ENCODE measurements at regions of chr7 and their contacts with region 1.

Region 1: DNA sequence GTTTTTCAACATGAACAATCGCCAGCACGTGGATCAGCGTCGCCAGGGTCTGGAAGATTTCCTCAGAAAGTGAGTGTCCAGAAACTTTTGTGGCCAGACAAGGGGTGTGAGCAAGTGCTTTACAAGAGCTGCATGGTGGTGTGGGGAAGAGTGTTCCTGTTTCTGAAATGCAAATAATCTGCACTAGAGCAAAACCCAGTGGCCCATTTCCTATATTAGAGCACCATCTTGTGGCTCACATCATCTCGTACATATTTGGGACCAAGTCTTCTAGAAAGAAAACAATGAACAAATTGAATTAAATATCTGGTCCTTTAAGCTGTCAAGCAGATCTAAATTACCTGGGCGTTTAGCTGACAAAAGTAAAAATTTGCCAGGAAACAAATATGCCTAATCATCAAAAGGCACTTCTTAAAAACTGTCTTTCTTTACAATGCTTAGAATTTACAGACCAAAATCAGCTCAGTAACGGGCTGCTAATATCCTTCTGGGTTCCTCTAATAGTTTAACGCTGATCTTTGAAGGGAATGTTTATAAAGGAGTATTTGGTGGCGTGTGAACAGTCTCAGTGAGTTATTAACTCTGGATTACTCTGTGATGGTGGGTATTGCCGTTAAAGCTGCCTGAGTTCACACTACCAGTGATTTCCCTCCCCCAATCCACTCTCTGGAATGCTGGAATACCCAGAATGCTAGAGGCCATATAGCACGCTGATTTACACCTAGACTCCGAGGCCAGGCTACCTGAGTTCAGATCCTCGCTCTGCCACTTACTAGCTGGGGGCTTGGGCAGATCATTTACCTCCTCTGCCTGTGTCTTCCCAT is 73.6 kb downstream of the SNX10 start:
- DNase-seq: peak; percentile 59
- ATAC-seq: peak; percentile 80
- H3K4me3 Mint-ChIP-seq: no peak overlapping the region
- H3K27ac Mint-ChIP-seq: no peak overlapping the region
- H3K4me1 Mint-ChIP-seq: peaks cover 11% of the 10 kb centered on the region
- H3K27me3 Mint-ChIP-seq: no peaks in the 10 kb centered on the region
- CTCF ChIP-seq: peak; percentile 70

Region 2: GRCh38 chr7:26078437-26079336 is 286.6 kb before region 1 on chr7:
- CTCF ChIA-PET with region 1: interaction called, 18 read pairs
- POLR2A ChIA-PET with region 1: no interaction called
- intact Hi-C with region 1: loop called (anchors 2 kb)
- DNase-seq: peak; percentile 92
- ATAC-seq: peak; percentile 99
- H3K4me3 Mint-ChIP-seq: no peak overlapping the region
- H3K27ac Mint-ChIP-seq: no peak overlapping the region
- H3K4me1 Mint-ChIP-seq: peaks cover 6% of the 10 kb centered on the region
- H3K27me3 Mint-ChIP-seq: peaks cover 18% of the 10 kb centered on the region
- CTCF ChIP-seq: peak; percentile 75

Region 3: DNA sequence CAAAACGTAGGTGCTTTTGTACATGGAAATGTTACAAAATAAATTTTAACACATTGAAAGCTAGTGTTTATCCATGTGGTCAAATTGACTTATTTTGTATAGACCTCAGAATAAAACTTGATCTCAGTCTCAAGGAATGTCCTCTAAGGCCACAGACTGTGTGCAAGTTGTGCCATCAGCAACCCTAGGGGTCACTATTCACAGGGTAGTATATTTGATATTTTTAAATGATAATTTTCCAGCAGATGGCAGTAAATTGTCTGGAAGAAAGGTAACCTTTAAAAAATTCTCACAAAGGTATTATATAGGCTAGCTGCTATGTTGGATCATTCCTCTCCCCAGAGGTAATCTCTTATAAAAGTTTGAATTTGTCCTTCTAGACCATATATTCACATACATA is 86.5 kb before region 1 on chr7:
- CTCF ChIA-PET with region 1: interaction called, 12 read pairs
- POLR2A ChIA-PET with region 1: no interaction called
- intact Hi-C with region 1: no loop called
- DNase-seq: peak; percentile 10
- ATAC-seq: peak; percentile 37
- H3K4me3 Mint-ChIP-seq: no peak overlapping the region
- H3K27ac Mint-ChIP-seq: no peak overlapping the region
- H3K4me1 Mint-ChIP-seq: peaks cover 24% of the 10 kb centered on the region
- H3K27me3 Mint-ChIP-seq: no peaks in the 10 kb centered on the region
- CTCF ChIP-seq: peak; percentile 44

Region 4: GRCh38 chr7:26305463-26306273 is 59.6 kb before region 1 on chr7:
- CTCF ChIA-PET with region 1: interaction called, 12 read pairs
- POLR2A ChIA-PET with region 1: no interaction called
- intact Hi-C with region 1: no loop called
- DNase-seq: peak; percentile 41
- ATAC-seq: peak; percentile 60
- H3K4me3 Mint-ChIP-seq: peak overlapping the region; percentile 12
- H3K27ac Mint-ChIP-seq: peak overlapping the region; percentile 76
- H3K4me1 Mint-ChIP-seq: peaks cover 11% of the 10 kb centered on the region
- H3K27me3 Mint-ChIP-seq: no peaks in the 10 kb centered on the region
- CTCF ChIP-seq: no peak

Region 5: GRCh38 chr7:26388256-26388655 is 23.0 kb after region 1 on chr7:
- CTCF ChIA-PET with region 1: interaction called, 12 read pairs
- POLR2A ChIA-PET with region 1: no interaction called
- intact Hi-C with region 1: no loop called
- DNase-seq: no peak
- ATAC-seq: peak; percentile 34
- H3K4me3 Mint-ChIP-seq: no peak overlapping the region
- H3K27ac Mint-ChIP-seq: no peak overlapping the region
- H3K4me1 Mint-ChIP-seq: no peaks in the 10 kb centered on the region
- H3K27me3 Mint-ChIP-seq: peaks cover 36% of the 10 kb centered on the region
- CTCF ChIP-seq: no peak

Region 6: GRCh38 chr7:26457696-26458327 is 92.5 kb after region 1 on chr7:
- CTCF ChIA-PET with region 1: no interaction called
- POLR2A ChIA-PET with region 1: no interaction called
- intact Hi-C with region 1: no loop called
- DNase-seq: no peak
- ATAC-seq: no peak
- H3K4me3 Mint-ChIP-seq: no peak overlapping the region
- H3K27ac Mint-ChIP-seq: no peak overlapping the region
- H3K4me1 Mint-ChIP-seq: no peaks in the 10 kb centered on the region
- H3K27me3 Mint-ChIP-seq: no peaks in the 10 kb centered on the region
- CTCF ChIP-seq: no peak

Region 7: DNA sequence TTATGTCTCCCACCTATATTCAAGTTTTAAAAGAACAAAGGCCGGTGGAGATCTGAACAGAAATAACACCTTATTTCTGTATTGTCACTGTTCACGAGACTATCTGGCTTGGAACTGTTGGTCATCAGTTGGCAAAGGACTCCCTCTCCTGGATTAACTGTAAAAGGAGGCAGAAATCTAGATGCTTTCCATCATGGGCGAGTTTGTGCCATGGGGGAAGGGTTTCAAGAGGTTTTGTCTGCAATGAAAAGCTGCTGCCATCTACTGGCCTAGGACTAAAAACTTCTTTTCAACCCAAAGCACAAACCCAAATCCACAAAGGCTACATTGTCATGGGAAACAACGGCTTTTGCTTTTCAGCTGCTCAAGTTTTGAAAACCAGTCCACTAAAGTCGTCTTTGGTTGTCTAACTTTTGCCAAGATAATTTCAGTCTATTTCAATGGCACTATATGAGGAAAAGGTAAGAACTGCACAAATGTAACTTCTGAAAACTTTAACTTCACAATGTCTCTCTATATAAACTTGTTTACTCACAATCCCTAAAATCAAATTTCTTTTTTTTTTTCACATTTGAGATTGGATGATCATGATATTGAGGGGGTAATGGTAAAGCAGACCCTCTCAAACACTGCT is 302.3 kb after region 1 on chr7:
- CTCF ChIA-PET with region 1: interaction called, 25 read pairs
- POLR2A ChIA-PET with region 1: no interaction called
- intact Hi-C with region 1: no loop called
- DNase-seq: peak; percentile 63
- ATAC-seq: peak; percentile 82
- H3K4me3 Mint-ChIP-seq: no peak overlapping the region
- H3K27ac Mint-ChIP-seq: no peak overlapping the region
- H3K4me1 Mint-ChIP-seq: peaks cover 16% of the 10 kb centered on the region
- H3K27me3 Mint-ChIP-seq: peaks cover 3% of the 10 kb centered on the region
- CTCF ChIP-seq: peak; percentile 72